ENCODE measurements at regions of chr12 and their contacts with region 1.

Region 1: DNA sequence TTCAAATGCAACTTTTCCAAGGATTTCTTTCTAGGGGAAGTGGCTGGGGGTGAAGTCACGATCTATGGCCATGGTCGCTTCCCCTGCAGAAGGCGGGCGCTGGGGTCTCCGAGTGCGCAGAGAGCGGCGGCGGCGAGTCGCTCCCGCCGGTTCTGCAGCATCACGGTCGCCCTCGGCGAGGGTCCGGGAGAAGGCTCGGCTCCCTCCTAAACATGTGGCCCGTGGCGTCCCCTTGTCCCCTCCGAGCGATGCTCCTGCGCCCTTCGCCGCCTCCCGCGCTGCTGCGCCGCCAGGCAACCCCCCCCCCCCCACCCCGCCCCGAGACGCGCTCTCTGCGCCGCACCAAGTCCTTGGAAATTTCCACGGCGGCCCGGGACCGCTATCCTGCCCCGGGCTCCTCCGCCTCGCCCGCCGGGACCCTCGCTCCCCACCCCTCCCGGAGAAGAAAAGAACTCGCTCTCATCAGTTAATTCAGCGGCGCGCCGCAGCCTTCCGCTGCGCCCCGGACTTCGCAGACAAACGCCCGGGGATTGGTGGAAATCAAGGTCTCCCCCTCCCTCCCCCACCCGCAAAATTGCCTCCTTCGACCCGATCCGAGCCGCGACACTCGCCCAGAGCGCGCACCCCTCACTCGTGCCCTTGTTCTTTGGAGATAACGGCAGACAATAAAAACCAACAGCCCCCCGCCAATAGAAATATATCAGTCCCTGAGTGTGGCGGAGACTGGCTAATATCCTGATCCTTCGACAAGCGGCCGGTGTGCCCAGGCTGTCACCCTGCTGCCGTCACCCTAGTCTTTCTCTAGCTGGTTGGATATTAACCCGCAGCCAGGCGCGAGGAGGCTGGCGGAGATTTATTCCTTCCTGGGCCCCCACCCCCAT is at the start of gene ST8SIA1:
- DNase-seq: peak; percentile 72 to 80 (median 75)
- H3K4me3 ChIP-seq: peak within 1 kb of the TSS; percentile 71 to 93
- H3K4me3 Mint-ChIP-seq: peak within 1 kb of the TSS; percentile 92 to 98 (median 96)
- H3K27ac ChIP-seq: peak within 1 kb of the TSS; percentile 75
- H3K27ac Mint-ChIP-seq: peak within 1 kb of the TSS; percentile 90 to 99 (median 93)
- H3K4me1 ChIP-seq: peaks cover 38% of the 10 kb centered on the region
- H3K4me1 Mint-ChIP-seq: peaks cover 40 to 60% (median 41%) of the 10 kb centered on the region in 4 donors
- H3K27me3 ChIP-seq: no peaks in the 10 kb centered on the region
- H3K27me3 Mint-ChIP-seq: peaks cover 0 to 2% of the 10 kb centered on the region in 2 donors
- total RNA-seq, gene ST8SIA1: 52.2 to 53.6 TPM

Region 2: DNA sequence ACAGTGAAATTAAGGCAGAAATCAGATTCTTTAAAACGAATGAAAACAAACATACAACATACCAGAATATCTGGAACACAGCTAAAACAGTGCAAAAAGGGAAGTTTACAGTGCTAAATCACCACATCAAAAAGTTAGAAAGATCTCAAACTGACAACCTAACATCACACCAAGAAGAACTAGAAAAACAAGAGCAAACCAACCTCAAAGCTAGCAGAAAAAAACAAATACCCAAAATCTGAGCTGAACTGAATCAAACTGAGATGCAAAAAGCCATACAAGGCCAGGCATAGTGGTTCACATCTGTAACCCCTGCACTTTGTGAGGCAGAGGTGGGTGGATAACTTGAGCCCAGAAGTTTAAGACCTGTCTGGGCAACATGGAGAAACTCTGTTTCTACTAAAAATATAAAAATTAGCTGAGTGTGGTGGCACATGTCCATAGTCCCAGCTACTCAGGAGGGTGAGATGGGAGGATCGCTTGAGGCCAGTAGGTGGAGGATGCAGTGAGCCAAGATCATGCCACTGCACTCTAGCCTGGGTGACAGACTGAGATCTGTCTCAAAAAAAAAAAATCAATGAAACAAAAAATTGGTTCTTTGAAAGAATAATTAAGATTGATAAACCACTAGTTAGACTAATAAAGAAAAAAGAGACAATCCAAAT is 643.8 kb before region 1 on chr12:
- CTCF ChIA-PET with region 1: interaction called, 4 read pairs
- POLR2A ChIA-PET with region 1: no interaction called
- intact Hi-C with region 1: loop called (anchors 5 kb)
- DNase-seq: peak in 3 of 5 donors; percentile 42 to 45 (median 45)
- H3K4me3 ChIP-seq: no peak overlapping the region
- H3K4me3 Mint-ChIP-seq: peak overlapping the region in 7 of 8 donors; percentile 2 to 77 (median 65)
- H3K27ac ChIP-seq: no peak overlapping the region
- H3K27ac Mint-ChIP-seq: peak overlapping the region; percentile 21 to 91 (median 83)
- H3K4me1 ChIP-seq: peaks cover 28% of the 10 kb centered on the region
- H3K4me1 Mint-ChIP-seq: peaks cover 24 to 32% (median 30%) of the 10 kb centered on the region in 4 donors
- H3K27me3 ChIP-seq: no peaks in the 10 kb centered on the region
- H3K27me3 Mint-ChIP-seq: no peaks in the 10 kb centered on the region

Region 3: DNA sequence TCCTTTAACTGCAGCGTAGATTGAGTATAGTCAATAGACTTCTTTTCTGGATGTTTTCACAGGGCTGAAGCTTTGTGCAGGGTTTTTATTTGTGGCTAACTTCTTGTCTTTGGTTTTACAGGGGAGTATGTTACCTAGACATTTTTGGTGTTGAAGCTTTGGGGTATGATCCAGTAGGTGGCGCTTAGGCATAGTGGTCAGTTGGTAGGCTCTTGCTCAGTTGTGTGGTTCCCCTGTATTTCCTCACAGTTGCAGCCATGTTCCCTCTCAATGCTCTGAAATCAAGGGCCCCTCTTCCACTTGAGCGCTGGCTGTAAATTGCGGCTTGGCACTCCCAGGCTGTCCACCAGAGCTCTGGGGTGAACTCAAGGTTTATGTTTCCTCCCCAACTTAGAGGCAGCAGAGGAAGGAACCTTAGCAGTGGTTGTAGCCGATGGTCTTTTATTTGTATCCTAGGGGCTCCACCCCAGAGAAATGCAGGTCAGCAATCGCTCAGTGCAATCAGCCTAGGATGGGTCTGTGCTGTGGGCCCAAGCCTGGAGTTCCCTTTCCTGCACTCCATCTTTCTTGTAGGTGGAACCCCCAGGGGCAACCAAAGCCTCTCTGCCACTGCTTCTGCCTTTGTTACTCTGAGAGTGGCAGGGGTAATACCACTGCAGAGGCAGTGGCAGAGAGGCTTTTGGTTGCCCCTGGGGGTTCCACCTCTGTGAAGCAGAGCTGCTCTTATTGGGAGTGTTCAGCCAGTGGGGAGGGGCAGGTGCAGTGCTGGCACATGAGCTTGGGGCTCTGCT is 233.5 kb before region 1 on chr12:
- CTCF ChIA-PET with region 1: interaction called, 38 read pairs
- POLR2A ChIA-PET with region 1: interaction called, 16 read pairs
- intact Hi-C with region 1: loop called (anchors 1 kb)
- DNase-seq: peak in 4 of 5 donors; percentile 45 to 55 (median 47)
- H3K4me3 ChIP-seq: no peak overlapping the region
- H3K4me3 Mint-ChIP-seq: peak overlapping the region in 1 of 8 donors; percentile 32
- H3K27ac ChIP-seq: no peak overlapping the region
- H3K27ac Mint-ChIP-seq: peak overlapping the region in 1 of 7 donors; percentile 13
- H3K4me1 ChIP-seq: peaks cover 14% of the 10 kb centered on the region
- H3K4me1 Mint-ChIP-seq: peaks cover 7 to 17% (median 13%) of the 10 kb centered on the region in 4 donors
- H3K27me3 ChIP-seq: no peaks in the 10 kb centered on the region
- H3K27me3 Mint-ChIP-seq: no peaks in the 10 kb centered on the region

Region 4: GRCh38 chr12:22287776-22288621 is 46.7 kb before region 1 on chr12:
- CTCF ChIA-PET with region 1: interaction called, 8 read pairs
- POLR2A ChIA-PET with region 1: interaction called, 15 read pairs
- intact Hi-C with region 1: loop called (anchors 2 kb)
- DNase-seq: peak; percentile 6 to 31 (median 22)
- H3K4me3 ChIP-seq: peak overlapping the region in 1 of 2 donors; percentile 35
- H3K4me3 Mint-ChIP-seq: peak overlapping the region; percentile 51 to 81 (median 70)
- H3K27ac ChIP-seq: no peak overlapping the region
- H3K27ac Mint-ChIP-seq: peak overlapping the region; percentile 1 to 66 (median 49)
- H3K4me1 ChIP-seq: peaks cover 32% of the 10 kb centered on the region
- H3K4me1 Mint-ChIP-seq: peaks cover 27 to 45% (median 37%) of the 10 kb centered on the region in 4 donors
- H3K27me3 ChIP-seq: no peaks in the 10 kb centered on the region
- H3K27me3 Mint-ChIP-seq: no peaks in the 10 kb centered on the region

Region 5: GRCh38 chr12:22396253-22396652 is 61.6 kb after region 1 on chr12:
- CTCF ChIA-PET with region 1: interaction called, 25 read pairs
- POLR2A ChIA-PET with region 1: interaction called, 24 read pairs
- intact Hi-C with region 1: loop called (anchors 1 kb)
- DNase-seq: peak; percentile 59 to 83 (median 67)
- H3K4me3 ChIP-seq: no peak overlapping the region
- H3K4me3 Mint-ChIP-seq: peak overlapping the region; percentile 36 to 83 (median 78)
- H3K27ac ChIP-seq: peak overlapping the region; percentile 61
- H3K27ac Mint-ChIP-seq: peak overlapping the region; percentile 83 to 96 (median 91)
- H3K4me1 ChIP-seq: peaks cover 60% of the 10 kb centered on the region
- H3K4me1 Mint-ChIP-seq: peaks cover 34 to 47% (median 42%) of the 10 kb centered on the region in 4 donors
- H3K27me3 ChIP-seq: no peaks in the 10 kb centered on the region
- H3K27me3 Mint-ChIP-seq: no peaks in the 10 kb centered on the region

Region 6: DNA sequence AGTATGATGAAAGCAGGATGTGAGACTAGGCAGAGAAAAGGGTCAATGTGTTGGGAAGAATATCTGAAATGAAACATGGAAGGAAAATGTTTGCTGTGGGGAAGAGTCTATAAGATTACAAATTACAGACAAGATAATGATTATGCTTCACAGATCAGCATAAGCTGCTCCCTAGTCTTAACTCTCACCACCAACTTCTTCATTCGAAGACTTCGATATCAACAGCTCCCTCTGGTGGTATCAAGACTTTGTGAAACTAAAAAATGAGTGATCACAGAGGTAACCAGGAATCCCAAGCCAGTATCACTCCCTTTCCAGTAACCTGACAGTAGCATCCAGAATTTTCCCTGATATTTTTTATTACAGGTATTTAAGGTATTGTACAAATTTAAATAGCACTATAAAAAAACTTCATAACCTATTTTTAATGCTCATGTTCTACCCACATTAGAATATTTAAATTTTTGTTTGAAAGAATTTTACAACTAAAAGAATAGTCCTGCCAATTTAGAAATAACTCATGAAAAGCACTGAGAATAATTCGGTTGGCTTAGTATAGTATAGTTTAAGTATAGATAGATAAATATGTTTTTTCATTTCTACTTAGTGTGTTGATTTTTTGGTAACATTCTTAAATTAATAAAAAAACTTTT is 125.3 kb after region 1 on chr12:
- CTCF ChIA-PET with region 1: interaction called, 17 read pairs
- POLR2A ChIA-PET with region 1: interaction called, 7 read pairs
- intact Hi-C with region 1: no loop called
- DNase-seq: peak in 4 of 5 donors; percentile 41 to 46 (median 44)
- H3K4me3 ChIP-seq: no peak overlapping the region
- H3K4me3 Mint-ChIP-seq: no peak overlapping the region
- H3K27ac ChIP-seq: no peak overlapping the region
- H3K27ac Mint-ChIP-seq: peak overlapping the region in 2 of 7 donors; percentile 5 to 38
- H3K4me1 ChIP-seq: no peaks in the 10 kb centered on the region
- H3K4me1 Mint-ChIP-seq: peaks cover 0 to 4% (median 2%) of the 10 kb centered on the region in 4 donors
- H3K27me3 ChIP-seq: no peaks in the 10 kb centered on the region
- H3K27me3 Mint-ChIP-seq: no peaks in the 10 kb centered on the region

Measured in CD4-positive, alpha-beta memory T cell (primary cell).